ENCODE measurements at regions of chr9 and their contacts with region 1.

Region 1: DNA sequence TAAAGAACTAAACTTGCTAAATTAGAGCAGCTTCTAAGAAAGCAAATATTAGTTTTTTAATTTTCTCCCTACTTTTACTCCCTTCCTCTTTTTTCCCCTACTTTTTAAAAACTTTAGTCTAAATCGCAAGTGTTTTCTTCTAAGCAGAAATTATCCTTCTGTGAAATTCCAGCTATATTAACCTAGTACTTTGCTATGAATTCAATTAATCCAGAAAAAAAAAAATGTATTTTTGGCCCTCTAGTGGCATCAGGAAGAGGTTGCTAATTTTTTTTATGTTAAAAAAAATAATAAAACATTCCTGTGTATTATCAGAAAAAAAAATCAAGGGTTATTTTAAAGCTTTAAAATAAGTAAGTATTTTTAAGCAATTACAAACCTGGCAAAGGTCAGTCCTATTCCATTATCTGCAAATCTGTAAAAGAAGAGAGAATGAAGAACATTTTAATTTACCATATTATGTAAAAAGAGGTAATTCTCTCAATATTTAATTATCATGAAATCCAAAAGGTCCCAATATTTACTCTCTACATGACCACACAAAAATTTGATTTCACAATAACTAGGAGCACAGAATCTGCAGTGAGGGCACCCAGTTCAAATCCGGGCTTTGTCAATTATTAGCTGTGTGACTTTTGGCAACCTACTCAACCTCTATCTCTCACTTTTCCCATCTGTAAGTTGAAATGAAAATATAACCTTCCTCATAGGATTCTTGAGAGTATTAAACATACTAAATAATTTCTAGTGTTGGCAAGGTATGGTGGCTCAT is 52.0 kb downstream of the CEMIP2 start:
- DNase-seq: peak; percentile 30
- H3K4me3 ChIP-seq: no peak overlapping the region
- H3K27ac ChIP-seq: no peak overlapping the region
- H3K4me1 ChIP-seq: no peaks in the 10 kb centered on the region
- H3K27me3 ChIP-seq: no peaks in the 10 kb centered on the region
- CTCF ChIP-seq: peak in 1 of 2 donors; percentile 20
- POLR2A ChIP-seq: no peak

Region 2: DNA sequence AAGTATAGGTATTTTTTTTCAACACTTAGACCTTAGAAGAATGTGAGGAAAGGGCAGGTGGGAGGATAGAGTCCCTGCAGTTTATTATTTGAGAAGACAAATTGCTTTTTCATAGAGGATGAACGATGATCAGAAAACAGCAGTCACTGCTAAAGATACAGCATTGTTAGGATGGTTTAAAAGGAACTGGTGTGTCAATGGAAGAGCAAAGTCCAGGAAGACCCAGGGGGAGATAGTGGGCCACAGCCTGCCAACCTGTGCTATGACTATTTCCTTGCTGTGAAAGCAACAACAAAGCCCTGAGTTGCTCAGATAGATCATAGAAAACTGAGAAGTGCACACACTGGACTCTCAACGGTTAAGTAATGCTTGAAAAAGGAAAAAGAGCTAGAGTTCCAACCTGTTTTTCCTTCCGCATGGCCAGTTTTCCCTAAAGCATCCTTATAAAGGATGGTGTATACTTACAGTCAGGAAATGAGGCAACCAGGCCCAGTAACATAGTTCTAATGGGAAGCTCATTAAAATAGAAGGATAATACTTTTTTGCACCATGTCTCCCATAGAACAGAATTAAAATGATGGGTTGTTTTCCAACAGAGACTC is 101.8 kb before region 1 on chr9:
- CTCF ChIA-PET with region 1: interaction called, 11 read pairs
- POLR2A ChIA-PET with region 1: no interaction called
- dilution Hi-C with region 1: no loop called
- intact Hi-C with region 1: no loop called
- DNase-seq: no peak
- H3K4me3 ChIP-seq: no peak overlapping the region
- H3K27ac ChIP-seq: no peak overlapping the region
- H3K4me1 ChIP-seq: no peaks in the 10 kb centered on the region
- H3K27me3 ChIP-seq: no peaks in the 10 kb centered on the region
- CTCF ChIP-seq: no peak
- POLR2A ChIP-seq: no peak

Region 3: GRCh38 chr9:71638627-71639026 is 77.7 kb before region 1 on chr9:
- CTCF ChIA-PET with region 1: interaction called, 10 read pairs
- POLR2A ChIA-PET with region 1: no interaction called
- dilution Hi-C with region 1: no loop called
- intact Hi-C with region 1: no loop called
- DNase-seq: peak; percentile 72
- H3K4me3 ChIP-seq: peak overlapping the region in 1 of 3 experiments; percentile 12
- H3K27ac ChIP-seq: peak overlapping the region; percentile 57
- H3K4me1 ChIP-seq: peaks cover 23% of the 10 kb centered on the region
- H3K27me3 ChIP-seq: no peaks in the 10 kb centered on the region
- CTCF ChIP-seq: no peak
- POLR2A ChIP-seq: no peak

Region 4: DNA sequence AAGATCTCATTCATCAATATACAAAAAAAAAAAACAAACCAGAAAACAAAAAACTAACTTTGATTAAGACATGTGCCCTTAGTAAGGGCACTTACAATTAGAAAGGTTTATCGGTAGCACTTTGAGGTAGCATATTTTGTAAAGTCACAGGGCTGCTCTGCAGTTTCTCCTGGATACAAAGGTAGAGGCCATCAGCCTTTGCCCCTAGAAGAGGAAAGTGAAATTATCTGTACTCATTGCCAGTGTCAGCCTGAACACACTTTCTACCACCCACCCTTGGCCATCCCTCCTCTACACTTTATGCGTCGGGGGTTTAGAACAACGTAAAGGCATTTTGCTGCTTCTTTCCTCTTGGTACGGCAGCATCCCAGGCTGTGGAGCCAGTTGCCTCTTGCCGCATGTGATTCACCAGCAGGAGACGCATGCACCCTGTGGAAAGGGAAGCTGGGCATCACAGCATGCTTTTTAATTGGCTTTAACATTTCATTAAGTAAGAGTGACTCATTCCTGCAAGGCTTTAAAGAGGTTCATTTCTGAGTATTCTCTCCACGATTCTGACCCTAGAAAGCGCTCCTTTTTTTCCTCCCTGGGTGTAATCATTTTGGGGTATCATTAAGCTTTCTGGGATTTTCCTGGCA is 32.6 kb before region 1 on chr9:
- CTCF ChIA-PET with region 1: interaction called, 32 read pairs
- POLR2A ChIA-PET with region 1: no interaction called
- dilution Hi-C with region 1: no loop called
- intact Hi-C with region 1: no loop called
- DNase-seq: no peak
- H3K4me3 ChIP-seq: no peak overlapping the region
- H3K27ac ChIP-seq: no peak overlapping the region
- H3K4me1 ChIP-seq: peaks cover 4% of the 10 kb centered on the region
- H3K27me3 ChIP-seq: no peaks in the 10 kb centered on the region
- CTCF ChIP-seq: no peak
- POLR2A ChIP-seq: no peak

Region 5: DNA sequence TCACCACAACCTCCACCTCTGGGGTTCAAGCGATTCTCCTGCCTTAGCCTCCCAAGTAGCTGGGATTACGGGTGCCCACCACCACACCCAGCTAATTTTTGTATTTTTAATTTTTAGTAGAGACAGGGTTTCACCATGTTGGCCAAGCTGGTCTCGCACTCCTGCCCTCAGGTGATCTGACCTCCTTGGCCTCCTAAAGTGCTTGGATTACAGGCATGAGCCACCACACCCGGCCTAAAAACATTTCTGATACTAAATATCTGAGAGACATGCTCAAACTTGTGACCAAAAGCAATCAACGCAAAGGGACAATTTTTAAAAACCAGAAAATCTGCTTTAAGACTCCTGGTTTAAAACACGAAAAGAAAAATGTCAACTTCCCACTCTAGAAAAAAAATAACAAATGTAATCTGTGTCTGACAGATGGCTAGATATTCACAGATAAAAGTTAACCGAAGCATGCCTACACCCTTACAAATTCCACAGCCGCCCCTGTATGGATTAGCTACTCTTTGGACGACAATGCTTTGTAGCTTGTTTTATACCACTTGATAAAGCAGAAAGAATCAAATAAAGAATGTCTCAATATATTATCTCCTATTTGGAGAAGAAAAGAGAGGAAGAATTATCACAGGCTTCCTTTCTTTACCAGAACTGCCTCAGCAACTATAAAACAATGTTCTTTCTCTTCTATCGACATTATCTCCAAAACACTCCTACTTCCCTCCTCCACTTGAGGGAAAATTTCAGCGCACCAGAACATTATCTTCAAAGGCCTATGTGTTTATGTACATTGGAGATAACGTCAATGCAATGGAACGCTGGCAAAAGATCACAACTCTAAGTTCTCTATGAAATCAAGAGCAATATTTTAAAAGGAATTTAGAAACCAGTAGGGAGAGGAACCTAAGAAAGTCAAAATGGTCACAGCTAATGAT is 25.7 kb after region 1 on chr9:
- CTCF ChIA-PET with region 1: interaction called, 10 read pairs
- POLR2A ChIA-PET with region 1: no interaction called
- dilution Hi-C with region 1: no loop called
- intact Hi-C with region 1: loop called (anchors 2 kb)
- DNase-seq: peak; percentile 86
- H3K4me3 ChIP-seq: no peak overlapping the region
- H3K27ac ChIP-seq: peak overlapping the region; percentile 3
- H3K4me1 ChIP-seq: peaks cover 15% of the 10 kb centered on the region
- H3K27me3 ChIP-seq: no peaks in the 10 kb centered on the region
- CTCF ChIP-seq: no peak
- POLR2A ChIP-seq: no peak

Region 6: GRCh38 chr9:71928832-71929604 is 212.7 kb after region 1 on chr9:
- CTCF ChIA-PET with region 1: no interaction called
- POLR2A ChIA-PET with region 1: no interaction called
- dilution Hi-C with region 1: no loop called
- intact Hi-C with region 1: no loop called
- DNase-seq: no peak
- H3K4me3 ChIP-seq: no peak overlapping the region
- H3K27ac ChIP-seq: no peak overlapping the region
- H3K4me1 ChIP-seq: no peaks in the 10 kb centered on the region
- H3K27me3 ChIP-seq: no peaks in the 10 kb centered on the region
- CTCF ChIP-seq: no peak
- POLR2A ChIP-seq: no peak

Region 7: DNA sequence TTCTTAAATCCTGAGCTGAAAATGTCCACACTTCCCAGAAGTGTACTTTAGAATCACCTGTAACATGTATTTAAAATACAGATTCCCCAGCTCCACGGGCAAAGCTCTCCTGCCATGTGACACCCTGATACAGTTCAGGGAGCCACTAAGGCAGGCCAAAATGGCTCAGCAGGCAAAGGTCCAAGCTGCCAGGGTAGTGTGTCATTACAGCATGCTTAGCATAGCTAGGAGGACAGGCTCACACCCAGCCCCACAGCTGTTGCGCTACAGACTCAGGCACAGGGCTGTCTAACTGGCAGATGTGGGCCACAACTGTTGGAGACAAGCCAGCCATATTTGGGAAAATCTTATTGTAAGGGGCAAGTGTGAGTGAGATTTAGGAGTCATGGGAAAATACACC is 268.1 kb after region 1 on chr9:
- CTCF ChIA-PET with region 1: no interaction called
- POLR2A ChIA-PET with region 1: no interaction called
- dilution Hi-C with region 1: no loop called
- intact Hi-C with region 1: no loop called
- DNase-seq: no peak
- H3K4me3 ChIP-seq: no peak overlapping the region
- H3K27ac ChIP-seq: no peak overlapping the region
- H3K4me1 ChIP-seq: no peaks in the 10 kb centered on the region
- H3K27me3 ChIP-seq: no peaks in the 10 kb centered on the region
- CTCF ChIP-seq: no peak
- POLR2A ChIP-seq: no peak

Measured in endothelial cell of umbilical vein (primary cell).